ENCODE measurements at regions of chr4 and their contacts with region 1.

Region 1: GRCh38 chr4:77156533-77156911 is 485 bp upstream of the CCNG2 start:
- DNase-seq: peak; percentile 91 to 95
- ATAC-seq: peak; percentile 97 to 99 (median 98)
- H3K4me3 ChIP-seq: peak overlapping the region; percentile 92
- H3K27ac ChIP-seq: peak overlapping the region; percentile 77
- H3K4me1 ChIP-seq: peaks cover 11% of the 10 kb centered on the region
- H3K27me3 ChIP-seq: no peaks in the 10 kb centered on the region
- CTCF ChIP-seq: no peak

Region 2: DNA sequence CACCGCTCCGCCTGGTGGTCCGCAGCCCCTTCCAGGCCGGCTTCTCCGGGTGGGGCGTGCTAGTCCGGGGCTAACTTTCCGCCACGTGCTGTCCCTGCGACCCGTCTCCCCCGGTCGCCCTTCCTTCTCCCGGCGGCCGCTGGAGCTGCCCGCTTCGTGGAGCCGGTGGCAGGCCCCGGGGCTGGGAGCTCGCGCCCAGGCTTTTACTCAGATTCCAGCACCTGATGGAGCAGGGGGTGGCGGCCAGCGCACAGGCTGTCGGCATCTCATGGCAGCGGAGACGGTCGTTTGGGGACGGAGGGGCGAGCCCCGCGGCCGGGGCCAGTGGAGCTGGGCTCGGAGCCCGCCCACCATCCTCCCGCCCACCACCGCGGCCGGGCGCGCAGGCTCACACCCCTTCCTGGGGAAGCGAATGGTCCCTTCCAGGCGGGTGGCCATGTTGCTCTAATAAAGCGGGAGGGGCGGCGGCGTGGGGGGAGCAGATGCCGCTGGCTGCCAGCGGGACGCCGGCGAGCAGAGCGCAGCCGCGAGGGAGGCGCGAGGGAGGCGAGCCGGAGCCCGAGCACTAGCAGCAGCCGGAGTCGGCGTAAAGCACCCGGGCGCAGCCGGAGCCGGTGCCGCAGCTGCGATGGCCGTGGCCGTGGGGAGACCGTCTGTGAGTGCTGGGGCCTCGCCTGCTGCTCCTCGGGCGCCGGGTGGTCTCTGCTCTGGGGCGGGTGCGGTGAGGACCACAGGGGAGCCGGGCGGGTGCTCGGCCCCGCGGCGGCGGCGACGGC is 207.1 kb before region 1 on chr4 and contains the start of gene SEPTIN11:
- intact Hi-C with region 1: loop called in 1 of 2 experiments (anchors 5 kb)
- DNase-seq: peak; percentile 95 to 96
- ATAC-seq: peak; percentile 90 to 91 (median 90)
- H3K4me3 ChIP-seq: peak within 1 kb of the TSS; percentile 92
- H3K27ac ChIP-seq: peak within 1 kb of the TSS; percentile 97
- H3K4me1 ChIP-seq: peaks cover 18% of the 10 kb centered on the region
- H3K27me3 ChIP-seq: no peaks in the 10 kb centered on the region
- CTCF ChIP-seq: no peak
- total RNA-seq, gene SEPTIN11: 20.9 to 54.0 (median 35.1) TPM

Region 3: GRCh38 chr4:77075869-77076799 is 80.4 kb before region 1 on chr4 and contains the start of gene CCNI:
- intact Hi-C with region 1: loop called in 1 of 2 experiments (anchors 5 kb)
- DNase-seq: peak; percentile 96 to 98
- ATAC-seq: peak; percentile 95 to 96 (median 96)
- H3K4me3 ChIP-seq: peak within 1 kb of the TSS; percentile 90
- H3K27ac ChIP-seq: peak within 1 kb of the TSS; percentile 95
- H3K4me1 ChIP-seq: peaks cover 36% of the 10 kb centered on the region
- H3K27me3 ChIP-seq: no peaks in the 10 kb centered on the region
- CTCF ChIP-seq: no peak
- total RNA-seq, gene CCNI: 147 to 182 (median 159) TPM

Region 4: DNA sequence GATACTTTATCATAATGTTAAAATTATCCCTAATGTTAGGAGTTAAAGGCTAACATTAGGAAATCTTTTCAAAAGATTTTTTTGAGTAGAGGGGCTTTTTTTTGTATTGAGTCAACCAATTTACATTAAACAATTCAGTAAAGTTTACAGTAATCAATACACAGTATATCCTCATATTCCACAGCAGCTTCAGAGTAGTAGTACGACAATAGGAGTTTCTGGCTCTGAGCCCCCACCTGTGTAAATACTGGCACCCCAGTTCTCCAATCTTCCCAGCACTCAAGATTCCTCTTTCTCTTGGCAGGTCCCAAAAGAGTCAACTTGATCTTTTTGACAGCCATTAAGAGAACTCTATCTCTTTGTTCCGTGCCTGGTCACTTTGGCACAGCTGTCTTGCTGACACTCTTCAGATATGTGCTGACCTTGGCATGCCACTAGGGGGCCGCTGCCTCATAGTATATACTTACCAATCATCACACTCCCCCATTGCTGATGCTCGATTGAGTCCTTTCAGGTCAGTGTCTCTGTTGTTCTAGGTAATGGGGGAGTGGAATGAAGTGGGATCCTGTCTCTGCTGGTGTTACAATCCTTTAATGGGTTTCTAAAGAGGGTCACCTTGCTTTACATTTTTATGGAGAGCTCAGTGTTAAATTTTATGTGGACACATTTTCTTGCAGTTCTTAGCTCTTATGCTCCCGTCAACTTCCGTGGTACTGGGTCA is 61.3 kb before region 1 on chr4:
- intact Hi-C with region 1: loop called (anchors 5 kb)
- DNase-seq: peak; percentile 70 to 85
- ATAC-seq: peak; percentile 94 to 99 (median 96)
- H3K4me3 ChIP-seq: no peak overlapping the region
- H3K27ac ChIP-seq: no peak overlapping the region
- H3K4me1 ChIP-seq: no peaks in the 10 kb centered on the region
- H3K27me3 ChIP-seq: no peaks in the 10 kb centered on the region
- CTCF ChIP-seq: peak; percentile 80

Measured in psoas muscle (tissue), 8 donors.